Activated CD8-positive, alpha-beta T cell treated with anti-CD3 and anti-CD28 coated beads, Interleukin-2, amount 10 ng/mL, durations not matched to agents 7 days and 5 days (primary cell): ENCODE measurements at regions of chr12 and their contacts with region 1.

Region 1: DNA sequence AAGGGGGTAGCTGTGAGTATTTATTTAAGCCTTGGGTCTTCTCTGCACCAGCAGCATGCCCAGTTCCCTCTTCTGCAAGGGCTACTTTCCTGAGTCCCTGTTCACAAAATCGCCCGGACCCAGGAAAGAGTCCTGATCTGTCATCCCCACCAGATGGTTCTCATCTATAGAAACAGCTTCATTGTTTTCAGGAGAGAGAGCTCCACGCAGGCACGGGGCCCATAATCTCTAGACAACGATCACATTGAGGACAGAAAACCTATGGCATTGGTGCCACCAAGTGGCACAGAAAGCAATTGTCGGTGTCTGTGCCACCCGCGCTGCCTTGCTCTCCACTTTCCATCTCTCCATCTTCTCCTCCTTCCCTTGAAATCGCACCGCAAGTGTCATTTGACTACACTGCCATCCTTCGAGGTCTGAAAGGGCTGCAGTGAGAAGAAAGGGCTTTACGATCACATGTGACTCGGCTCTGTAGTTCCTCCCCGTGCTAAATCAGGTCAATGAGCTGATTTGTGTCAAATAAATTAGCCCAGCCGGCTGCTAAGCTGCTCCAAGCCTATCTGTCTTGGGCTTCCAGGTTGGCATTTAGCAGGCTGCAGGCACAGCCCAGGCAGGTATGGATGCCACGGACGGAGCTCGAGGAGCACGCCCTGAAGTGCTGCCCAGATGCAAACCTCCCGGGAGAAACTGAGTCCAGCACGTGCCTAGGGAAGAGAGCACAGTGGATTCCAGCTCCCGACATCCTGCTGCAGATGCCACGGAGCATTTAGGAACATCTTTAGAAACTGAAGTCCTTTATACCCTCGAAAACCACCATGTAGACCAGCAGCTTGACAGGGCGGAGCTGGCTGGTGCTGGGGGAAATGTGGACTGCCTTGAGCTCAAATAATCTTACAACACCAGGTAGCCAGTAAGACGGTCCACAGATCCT is 28.8 kb downstream of the SPRING1 start:
- DNase-seq: peak; percentile 56
- ATAC-seq: peak; percentile 87
- H3K4me3 Mint-ChIP-seq: no peak overlapping the region
- H3K27ac Mint-ChIP-seq: no peak overlapping the region
- H3K4me1 Mint-ChIP-seq: peaks cover 9% of the 10 kb centered on the region
- H3K27me3 Mint-ChIP-seq: peaks cover 19% of the 10 kb centered on the region

Region 2: GRCh38 chr12:116015525-116015924 is 693.6 kb before region 1 on chr12:
- CTCF ChIA-PET with region 1: interaction called, 11 read pairs
- POLR2A ChIA-PET with region 1: no interaction called
- DNase-seq: no peak
- ATAC-seq: peak; percentile 74
- H3K4me3 Mint-ChIP-seq: no peak overlapping the region
- H3K27ac Mint-ChIP-seq: no peak overlapping the region
- H3K4me1 Mint-ChIP-seq: no peaks in the 10 kb centered on the region
- H3K27me3 Mint-ChIP-seq: no peaks in the 10 kb centered on the region

Region 3: GRCh38 chr12:116135209-116135930 is 573.7 kb before region 1 on chr12:
- CTCF ChIA-PET with region 1: interaction called, 10 read pairs
- POLR2A ChIA-PET with region 1: no interaction called
- DNase-seq: no peak
- ATAC-seq: no peak
- H3K4me3 Mint-ChIP-seq: no peak overlapping the region
- H3K27ac Mint-ChIP-seq: peak overlapping the region; percentile 22
- H3K4me1 Mint-ChIP-seq: peaks cover 60% of the 10 kb centered on the region
- H3K27me3 Mint-ChIP-seq: no peaks in the 10 kb centered on the region

Region 4: GRCh38 chr12:116599285-116600136 is 109.6 kb before region 1 on chr12:
- CTCF ChIA-PET with region 1: interaction called, 10 read pairs
- POLR2A ChIA-PET with region 1: no interaction called
- DNase-seq: peak; percentile 68
- ATAC-seq: no peak
- H3K4me3 Mint-ChIP-seq: no peak overlapping the region
- H3K27ac Mint-ChIP-seq: no peak overlapping the region
- H3K4me1 Mint-ChIP-seq: peaks cover 44% of the 10 kb centered on the region
- H3K27me3 Mint-ChIP-seq: peaks cover 2% of the 10 kb centered on the region

Region 5: DNA sequence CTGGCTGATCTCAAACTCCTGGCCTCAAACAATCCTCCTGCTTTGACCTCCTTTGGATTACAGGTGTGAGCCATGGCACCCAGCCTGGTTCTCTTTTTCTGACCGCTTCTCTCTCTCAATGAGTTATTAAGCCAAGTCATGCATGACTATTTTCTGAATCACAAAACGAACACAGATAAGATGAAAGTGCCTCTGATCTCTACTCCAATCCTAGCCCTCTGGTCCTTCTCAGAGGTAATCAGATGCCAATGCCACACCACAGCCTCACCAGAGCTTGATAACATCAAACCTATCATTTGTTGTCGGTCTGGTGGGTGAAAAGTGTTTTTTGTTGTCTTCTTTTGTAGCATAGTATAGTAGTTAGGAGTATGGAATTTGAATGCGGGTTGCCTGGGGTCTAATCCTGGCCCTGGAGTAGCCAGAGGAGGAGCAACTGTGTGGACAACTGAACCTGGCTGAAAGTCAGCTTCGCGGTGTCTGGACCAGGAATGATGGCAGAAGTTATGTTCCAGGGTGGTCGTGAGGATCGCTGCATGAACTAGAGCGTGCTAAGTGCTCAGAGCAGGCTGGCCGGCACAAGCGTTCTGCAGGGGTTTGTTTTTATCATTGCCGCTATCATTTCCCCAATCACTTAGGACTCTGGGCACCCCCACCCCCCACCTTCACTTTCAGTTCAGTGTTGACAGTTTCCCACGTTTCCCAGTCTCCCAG is 49.2 kb before region 1 on chr12:
- CTCF ChIA-PET with region 1: no interaction called
- POLR2A ChIA-PET with region 1: no interaction called
- DNase-seq: no peak
- ATAC-seq: no peak
- H3K4me3 Mint-ChIP-seq: no peak overlapping the region
- H3K27ac Mint-ChIP-seq: no peak overlapping the region
- H3K4me1 Mint-ChIP-seq: peaks cover 3% of the 10 kb centered on the region
- H3K27me3 Mint-ChIP-seq: peaks cover 17% of the 10 kb centered on the region

Region 6: DNA sequence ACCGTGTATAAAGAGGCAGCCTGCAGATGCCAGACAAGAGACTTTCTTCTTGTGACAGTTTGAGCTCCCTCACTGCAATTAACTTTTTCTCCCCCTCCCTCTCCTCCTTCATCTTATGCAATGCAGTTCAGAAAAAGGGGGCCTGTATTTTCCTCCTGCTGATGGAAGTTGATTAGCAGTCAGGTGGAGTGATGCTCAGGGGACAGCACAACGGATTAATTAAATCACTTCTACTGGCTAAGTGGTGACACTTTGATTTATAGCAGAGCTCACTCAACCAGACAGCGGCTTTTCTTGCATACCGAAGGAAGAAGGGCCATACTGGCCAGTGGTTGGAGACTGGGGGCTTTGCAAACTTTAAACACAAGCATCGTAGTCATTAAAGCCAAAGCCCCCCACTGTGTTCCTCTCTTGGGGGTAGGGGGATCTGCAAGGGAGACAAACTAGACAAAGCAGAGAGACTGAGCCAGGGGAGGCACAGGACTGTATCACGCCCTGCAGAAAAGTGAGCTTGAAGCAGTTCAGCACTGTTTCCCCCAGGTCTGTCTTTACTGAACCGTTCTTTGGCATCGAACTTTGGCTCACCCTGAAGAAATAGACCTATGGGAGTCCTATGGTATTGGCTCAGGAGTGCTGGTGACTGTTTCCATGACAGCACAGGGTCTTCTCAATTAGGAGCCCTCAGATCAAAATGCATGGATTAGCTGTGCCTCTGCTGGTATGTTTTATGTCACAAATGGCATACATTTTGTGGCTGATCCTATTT is 18.9 kb before region 1 on chr12:
- CTCF ChIA-PET with region 1: interaction called, 16 read pairs
- POLR2A ChIA-PET with region 1: no interaction called
- DNase-seq: no peak
- ATAC-seq: no peak
- H3K4me3 Mint-ChIP-seq: no peak overlapping the region
- H3K27ac Mint-ChIP-seq: no peak overlapping the region
- H3K4me1 Mint-ChIP-seq: peaks cover 4% of the 10 kb centered on the region
- H3K27me3 Mint-ChIP-seq: peaks cover 27% of the 10 kb centered on the region

Region 7: DNA sequence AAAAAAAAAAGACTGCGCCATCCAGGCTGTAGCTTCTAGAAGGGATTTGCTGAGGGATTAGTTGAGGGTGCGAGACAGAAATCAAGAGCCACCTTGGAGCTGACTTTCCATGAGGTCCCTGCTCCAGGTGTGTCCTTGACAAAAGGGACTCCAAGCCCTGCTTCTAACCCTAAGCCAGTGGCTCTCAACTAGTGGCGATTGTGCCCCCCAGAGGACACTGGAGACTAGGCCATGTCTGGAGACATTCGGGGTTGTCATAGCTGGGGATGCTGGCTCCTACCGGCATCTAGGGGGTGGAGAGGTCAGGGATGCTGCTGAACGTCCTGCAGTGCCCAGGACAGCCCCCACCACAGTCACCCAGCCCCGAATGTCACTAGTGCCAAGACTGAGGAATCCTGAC is 11.8 kb before region 1 on chr12:
- CTCF ChIA-PET with region 1: interaction called, 23 read pairs
- POLR2A ChIA-PET with region 1: no interaction called
- DNase-seq: peak; percentile 31
- ATAC-seq: no peak
- H3K4me3 Mint-ChIP-seq: no peak overlapping the region
- H3K27ac Mint-ChIP-seq: no peak overlapping the region
- H3K4me1 Mint-ChIP-seq: peaks cover 4% of the 10 kb centered on the region
- H3K27me3 Mint-ChIP-seq: peaks cover 28% of the 10 kb centered on the region

Region 8: DNA sequence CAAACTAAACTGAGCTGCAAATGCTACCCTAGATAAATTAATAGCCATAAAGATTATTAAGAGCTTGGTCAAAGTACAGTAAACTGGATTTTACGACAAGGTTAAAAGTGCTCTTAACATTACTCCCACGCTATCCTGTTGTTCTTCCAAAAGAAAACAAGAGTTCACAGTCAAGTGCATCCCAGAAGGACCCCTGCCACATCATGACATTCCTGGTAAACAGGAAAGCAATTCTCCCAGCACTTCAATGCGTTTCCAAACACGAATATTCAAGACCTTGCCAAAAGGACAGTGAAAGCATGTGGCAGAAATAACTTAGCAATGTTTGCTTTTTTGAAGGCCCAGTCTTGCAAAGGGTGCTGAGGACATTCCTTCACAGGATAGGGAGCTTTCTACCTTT is 17.6 kb after region 1 on chr12:
- CTCF ChIA-PET with region 1: interaction called, 21 read pairs
- POLR2A ChIA-PET with region 1: no interaction called
- DNase-seq: no peak
- ATAC-seq: no peak
- H3K4me3 Mint-ChIP-seq: no peak overlapping the region
- H3K27ac Mint-ChIP-seq: no peak overlapping the region
- H3K4me1 Mint-ChIP-seq: peaks cover 4% of the 10 kb centered on the region
- H3K27me3 Mint-ChIP-seq: no peaks in the 10 kb centered on the region

Region 9: GRCh38 chr12:116855744-116856470 is 146.8 kb after region 1 on chr12:
- CTCF ChIA-PET with region 1: no interaction called
- POLR2A ChIA-PET with region 1: no interaction called
- DNase-seq: no peak
- ATAC-seq: no peak
- H3K4me3 Mint-ChIP-seq: no peak overlapping the region
- H3K27ac Mint-ChIP-seq: no peak overlapping the region
- H3K4me1 Mint-ChIP-seq: peaks cover 5% of the 10 kb centered on the region
- H3K27me3 Mint-ChIP-seq: peaks cover 11% of the 10 kb centered on the region